T-cell (primary cell): ENCODE measurements at regions of chr3 and their contacts with region 1.

Region 1: DNA sequence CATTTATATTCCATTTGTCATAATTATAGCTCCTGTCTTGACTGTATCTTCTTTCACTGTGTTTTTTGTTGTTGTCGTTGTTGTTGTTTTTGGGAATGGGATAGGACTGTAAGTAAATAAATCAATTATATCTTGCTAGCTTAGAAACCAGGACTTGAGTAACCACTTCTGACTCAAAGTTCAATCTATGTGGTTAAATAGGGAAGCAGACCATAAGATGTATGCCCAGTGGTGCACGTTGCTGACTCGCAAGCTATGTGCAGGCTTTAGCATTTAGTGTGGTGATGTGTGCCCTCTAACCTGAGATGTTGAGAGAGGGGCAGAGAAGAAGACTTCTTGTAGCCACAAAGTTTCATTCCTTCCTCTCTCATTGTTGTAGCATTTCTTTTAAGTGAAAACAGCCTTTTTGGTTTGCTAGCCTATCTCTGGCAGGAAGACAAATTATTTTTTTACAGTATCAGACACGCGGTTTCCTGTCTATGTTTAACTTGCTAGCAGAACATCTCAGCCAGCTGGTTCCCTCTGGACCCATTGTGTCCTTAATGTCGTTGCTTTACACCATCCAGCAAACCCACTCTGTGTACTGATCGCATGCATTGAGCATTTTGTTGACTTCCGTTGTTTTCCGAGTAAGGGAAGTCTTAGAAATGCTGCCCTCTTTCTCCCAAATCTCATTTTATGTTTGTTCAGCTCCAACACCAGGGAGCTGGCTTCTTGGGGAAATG is 52.1 kb downstream of the TGFBR2 start:
- DNase-seq: peak in 31 of 35 experiments; percentile 28 to 79 (median 47)
- ATAC-seq: peak; percentile 58 to 72 (median 68)
- H3K4me3 ChIP-seq: peak overlapping the region in 1 of 2 donors; percentile 3
- H3K4me3 Mint-ChIP-seq: peak overlapping the region; percentile 58 to 76 (median 62)
- H3K27ac ChIP-seq: peak overlapping the region; percentile 97
- H3K27ac Mint-ChIP-seq: peak overlapping the region; percentile 95 to 96
- H3K4me1 ChIP-seq: peaks cover 82 to 100% of the 10 kb centered on the region in 2 experiments
- H3K4me1 Mint-ChIP-seq: peaks cover 97 to 99% (median 97%) of the 10 kb centered on the region in 3 donors
- H3K27me3 ChIP-seq: no peaks in the 10 kb centered on the region
- H3K27me3 Mint-ChIP-seq: no peaks in the 10 kb centered on the region

Region 2: DNA sequence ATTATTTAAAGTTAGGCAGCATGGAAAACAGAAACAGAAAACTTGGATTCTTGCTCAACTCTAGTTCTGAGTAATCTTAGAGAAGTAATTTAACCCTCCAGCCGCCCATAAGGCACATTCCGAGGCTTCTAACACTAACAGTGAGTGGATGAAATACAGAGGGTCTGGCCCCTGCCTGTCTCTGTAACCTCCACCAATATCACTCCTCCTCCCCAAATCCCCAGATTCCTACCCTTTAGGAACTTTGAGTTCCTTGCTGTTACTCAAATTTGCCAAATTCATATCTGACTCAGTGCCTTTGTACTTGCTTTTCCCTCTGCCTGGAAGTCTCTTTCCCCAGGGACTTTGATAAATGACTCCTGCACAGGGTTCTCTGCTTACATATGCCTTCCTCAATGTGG is 164.6 kb before region 1 on chr3:
- CTCF ChIA-PET with region 1: no interaction called
- POLR2A ChIA-PET with region 1: no interaction called
- DNase-seq: no peak
- ATAC-seq: no peak
- H3K4me3 ChIP-seq: no peak overlapping the region
- H3K4me3 Mint-ChIP-seq: no peak overlapping the region
- H3K27ac ChIP-seq: no peak overlapping the region
- H3K27ac Mint-ChIP-seq: no peak overlapping the region
- H3K4me1 ChIP-seq: peaks cover 3 to 13% of the 10 kb centered on the region in 2 experiments
- H3K4me1 Mint-ChIP-seq: peaks cover 17 to 25% (median 25%) of the 10 kb centered on the region in 3 donors
- H3K27me3 ChIP-seq: no peaks in the 10 kb centered on the region
- H3K27me3 Mint-ChIP-seq: no peaks in the 10 kb centered on the region

Region 3: GRCh38 chr3:30578479-30578878 is 80.0 kb before region 1 on chr3:
- CTCF ChIA-PET with region 1: no interaction called
- POLR2A ChIA-PET with region 1: no interaction called
- DNase-seq: peak in 6 of 35 experiments; percentile 1 to 33 (median 6)
- ATAC-seq: no peak
- H3K4me3 ChIP-seq: no peak overlapping the region
- H3K4me3 Mint-ChIP-seq: no peak overlapping the region
- H3K27ac ChIP-seq: no peak overlapping the region
- H3K27ac Mint-ChIP-seq: no peak overlapping the region
- H3K4me1 ChIP-seq: peaks cover 0 to 2% of the 10 kb centered on the region in 2 experiments
- H3K4me1 Mint-ChIP-seq: peaks cover 0 to 9% (median 3%) of the 10 kb centered on the region in 3 donors
- H3K27me3 ChIP-seq: no peaks in the 10 kb centered on the region
- H3K27me3 Mint-ChIP-seq: no peaks in the 10 kb centered on the region

Region 4: GRCh38 chr3:30679045-30679444 is 20.6 kb after region 1 on chr3:
- CTCF ChIA-PET with region 1: interaction called in 1 of 2 experiments, 4 read pairs
- POLR2A ChIA-PET with region 1: interaction called, 5 to 15 read pairs
- DNase-seq: no peak
- ATAC-seq: no peak
- H3K4me3 ChIP-seq: no peak overlapping the region
- H3K4me3 Mint-ChIP-seq: peak overlapping the region in 2 of 3 donors; percentile 9 to 43
- H3K27ac ChIP-seq: peak overlapping the region; percentile 9
- H3K27ac Mint-ChIP-seq: peak overlapping the region; percentile 81 to 84
- H3K4me1 ChIP-seq: peaks cover 55 to 75% of the 10 kb centered on the region in 2 experiments
- H3K4me1 Mint-ChIP-seq: peaks cover 94 to 98% (median 96%) of the 10 kb centered on the region in 3 donors
- H3K27me3 ChIP-seq: no peaks in the 10 kb centered on the region
- H3K27me3 Mint-ChIP-seq: no peaks in the 10 kb centered on the region

Region 5: GRCh38 chr3:30786365-30786764 is 127.9 kb after region 1 on chr3:
- CTCF ChIA-PET with region 1: no interaction called
- POLR2A ChIA-PET with region 1: no interaction called
- DNase-seq: no peak
- ATAC-seq: no peak
- H3K4me3 ChIP-seq: no peak overlapping the region
- H3K4me3 Mint-ChIP-seq: no peak overlapping the region
- H3K27ac ChIP-seq: no peak overlapping the region
- H3K27ac Mint-ChIP-seq: no peak overlapping the region
- H3K4me1 ChIP-seq: no peaks in the 10 kb centered on the region
- H3K4me1 Mint-ChIP-seq: no peaks in the 10 kb centered on the region
- H3K27me3 ChIP-seq: no peaks in the 10 kb centered on the region
- H3K27me3 Mint-ChIP-seq: no peaks in the 10 kb centered on the region